GM10248 (cell line): ENCODE measurements at regions of chr14 and their contacts with region 1.

Region 1: DNA sequence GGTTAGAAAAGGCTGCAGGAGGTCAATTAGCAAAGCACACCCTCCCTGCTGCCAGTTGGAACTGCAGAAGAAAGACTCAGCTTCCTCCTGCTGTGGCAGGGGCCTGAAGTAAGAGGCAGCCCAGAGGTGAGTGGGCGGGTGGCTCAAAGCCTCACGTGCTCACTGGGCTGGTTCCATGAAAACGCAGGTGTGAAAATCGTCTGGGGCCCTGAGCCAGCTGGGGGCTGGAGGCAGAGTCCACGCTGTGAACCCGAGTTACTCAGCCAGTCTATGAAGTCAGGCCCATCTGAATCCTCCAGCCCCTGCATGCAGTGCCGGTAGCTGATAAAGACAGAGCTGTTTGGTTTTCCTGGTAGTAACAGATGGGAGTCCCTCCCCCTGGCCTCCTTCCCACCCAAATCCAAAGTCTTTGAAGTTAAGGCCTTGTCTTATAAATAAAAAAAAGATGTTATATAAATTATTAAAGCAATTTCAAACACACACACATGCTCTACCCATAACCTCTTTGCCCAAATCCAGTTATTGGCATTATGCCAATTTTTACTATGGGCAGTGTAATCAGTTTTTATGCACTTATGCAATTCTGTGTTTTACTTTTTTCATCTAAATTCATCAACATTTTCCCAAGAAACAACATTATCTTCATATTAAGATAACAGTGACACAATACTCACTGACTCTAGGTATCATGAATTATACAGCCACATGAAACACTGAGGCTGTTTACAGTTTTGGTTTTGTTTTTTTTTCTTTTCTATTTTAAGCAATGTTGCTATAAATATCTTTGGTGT is 57.9 kb upstream of the PNMA1 start:
- DNase-seq: peak; percentile 78
- CTCF ChIP-seq: no peak

Region 2: GRCh38 chr14:73753959-73754882 is 17.8 kb before region 1 on chr14:
- CTCF ChIA-PET with region 1: interaction called, 83 read pairs
- POLR2A ChIA-PET with region 1: interaction called, 44 read pairs
- DNase-seq: peak; percentile 73
- CTCF ChIP-seq: no peak

Region 3: DNA sequence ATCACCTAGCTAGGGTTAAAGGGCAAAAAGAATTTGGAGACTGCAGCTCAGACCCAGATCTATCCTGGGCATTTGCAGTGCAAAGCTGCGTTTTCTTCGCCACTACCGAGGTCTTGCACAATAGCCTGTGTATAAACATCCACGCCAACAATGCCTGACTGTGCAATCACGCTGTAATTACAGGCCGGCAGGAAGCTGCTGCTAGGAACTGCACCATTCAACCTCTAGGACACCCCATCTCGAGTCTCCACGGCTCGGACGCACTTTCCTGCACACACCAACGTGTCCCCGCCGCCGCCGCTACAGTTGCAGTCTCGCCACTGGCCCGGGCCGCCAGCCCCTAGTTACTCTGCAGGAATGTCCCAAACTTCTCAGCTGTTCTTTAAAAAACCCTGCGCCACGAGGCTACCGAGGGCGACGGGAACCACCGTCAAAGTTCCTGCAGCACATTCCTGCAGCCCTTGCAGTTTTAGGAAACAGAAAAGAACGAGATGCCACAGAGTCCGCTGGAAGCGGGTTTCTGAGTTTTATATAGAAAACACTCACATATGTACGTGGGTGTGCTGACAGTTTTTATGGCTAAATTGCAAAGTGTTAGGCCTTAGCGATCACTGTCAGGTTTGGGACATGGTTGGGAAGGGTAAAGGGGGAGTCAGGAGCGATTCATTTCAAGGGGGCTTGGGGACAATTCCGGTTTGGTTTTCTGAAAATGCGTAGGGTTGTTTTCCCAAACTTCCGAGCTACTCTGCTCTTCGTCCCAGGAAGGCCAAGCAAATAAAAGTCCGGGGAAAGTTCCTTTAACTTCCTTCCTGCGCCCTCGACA is 14.0 kb after region 1 on chr14:
- CTCF ChIA-PET with region 1: interaction called, 26 read pairs
- POLR2A ChIA-PET with region 1: interaction called, 12 read pairs
- DNase-seq: no peak
- CTCF ChIP-seq: no peak

Region 4: DNA sequence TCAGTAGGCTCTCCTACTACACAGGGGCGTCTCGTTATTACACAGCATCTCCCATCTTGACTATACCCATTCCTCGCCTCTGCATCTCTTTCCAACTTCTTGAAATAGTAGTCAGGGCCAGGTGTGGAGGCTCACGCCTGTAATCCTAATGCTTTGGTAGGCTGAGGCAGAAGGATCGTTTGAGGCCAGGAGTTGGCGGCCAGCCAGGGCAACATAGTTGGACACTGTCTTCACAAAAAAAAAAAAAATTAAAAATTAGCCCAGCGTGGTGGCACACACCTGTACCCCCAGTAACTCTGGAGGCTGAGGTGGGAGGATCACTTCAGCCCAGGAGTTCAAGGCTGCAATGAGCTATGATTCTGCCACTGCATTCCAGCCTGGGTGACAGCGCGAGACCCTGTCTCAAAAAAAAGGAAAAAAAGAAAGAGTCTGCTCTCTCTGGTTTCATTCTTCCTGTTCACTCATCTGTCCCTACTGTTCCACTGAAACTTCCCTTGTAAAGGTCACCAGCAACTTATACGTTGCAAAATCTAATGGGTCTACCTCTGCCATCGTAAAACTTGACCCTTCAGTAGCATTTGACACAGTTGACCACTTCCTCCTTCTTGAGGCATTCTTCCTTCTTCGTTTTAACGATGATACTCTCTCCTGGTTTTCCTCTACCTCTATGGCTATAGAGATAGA is 38.6 kb after region 1 on chr14:
- CTCF ChIA-PET with region 1: no interaction called
- POLR2A ChIA-PET with region 1: no interaction called
- DNase-seq: no peak
- CTCF ChIP-seq: no peak